PC-9 (cell line): ENCODE measurements at regions of chr6 and their contacts with region 1.

Region 1: GRCh38 chr6:105402939-105403935 is at the start of gene PREP:
- DNase-seq: peak; percentile 68 to 90
- H3K4me3 ChIP-seq: peak within 1 kb of the TSS; percentile 81
- H3K27ac ChIP-seq: peak within 1 kb of the TSS; percentile 69
- H3K4me1 ChIP-seq: peaks cover 20% of the 10 kb centered on the region
- H3K27me3 ChIP-seq: no peaks in the 10 kb centered on the region
- CTCF ChIP-seq: peak; percentile 96
- total RNA-seq, gene PREP: 35.8 and 36.7 TPM in 2 replicates

Region 2: DNA sequence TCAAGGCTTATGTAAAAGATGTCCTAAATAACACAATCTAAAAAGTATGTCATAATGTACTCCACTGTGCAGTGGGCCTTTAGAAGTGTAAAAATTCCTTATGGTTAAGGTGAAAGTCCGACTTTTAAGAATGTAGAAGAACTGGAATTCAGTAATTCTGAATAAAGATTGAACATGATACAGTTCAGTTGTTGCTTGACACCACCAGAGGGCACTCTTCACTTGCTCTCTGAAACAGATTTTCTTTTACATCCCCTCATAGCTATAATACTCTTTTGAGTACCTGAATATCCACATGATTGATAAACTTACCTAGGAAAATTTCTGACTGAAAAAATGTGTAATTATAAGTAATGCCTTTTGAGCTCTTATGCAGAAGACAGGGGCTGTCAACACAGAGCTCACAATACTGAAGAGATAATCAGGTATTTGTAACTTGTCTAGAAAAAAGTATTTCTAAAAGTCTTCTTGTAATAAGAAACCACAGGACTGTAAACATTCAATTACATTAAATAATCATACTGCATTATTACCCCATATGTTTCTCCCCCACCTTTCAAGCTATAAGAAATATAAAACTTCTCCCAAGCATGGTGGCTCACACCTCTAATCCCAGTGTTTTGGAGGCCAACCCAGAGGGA is 315.5 kb before region 1 on chr6:
- CTCF ChIA-PET with region 1: interaction called, 3 read pairs
- POLR2A ChIA-PET with region 1: interaction called, 61 read pairs
- intact Hi-C with region 1: loop called (anchors 1 kb)
- DNase-seq: peak; percentile 16 to 75
- H3K4me3 ChIP-seq: no peak overlapping the region
- H3K27ac ChIP-seq: no peak overlapping the region
- H3K4me1 ChIP-seq: peaks cover 4% of the 10 kb centered on the region; the same call in 1 of the 2 replicates
- H3K27me3 ChIP-seq: no peaks in the 10 kb centered on the region
- CTCF ChIP-seq: peak; percentile 96

Region 3: GRCh38 chr6:105317607-105318533 is 85.4 kb before region 1 on chr6:
- CTCF ChIA-PET with region 1: no interaction called
- POLR2A ChIA-PET with region 1: no interaction called
- intact Hi-C with region 1: loop called (anchors 1 kb)
- DNase-seq: peak; percentile 24 to 44
- H3K4me3 ChIP-seq: no peak overlapping the region
- H3K27ac ChIP-seq: no peak overlapping the region
- H3K4me1 ChIP-seq: no peaks in the 10 kb centered on the region
- H3K27me3 ChIP-seq: no peaks in the 10 kb centered on the region
- CTCF ChIP-seq: peak; percentile 82

Region 4: GRCh38 chr6:105326833-105327770 is 76.1 kb before region 1 on chr6:
- CTCF ChIA-PET with region 1: interaction called, 7 read pairs
- POLR2A ChIA-PET with region 1: no interaction called
- intact Hi-C with region 1: loop called (anchors 2 kb)
- DNase-seq: peak; percentile 44 to 83
- H3K4me3 ChIP-seq: no peak overlapping the region; the same call in 1 of the 2 replicates
- H3K27ac ChIP-seq: peak overlapping the region; percentile 62
- H3K4me1 ChIP-seq: peaks cover 27% of the 10 kb centered on the region
- H3K27me3 ChIP-seq: no peaks in the 10 kb centered on the region
- CTCF ChIP-seq: no peak

Region 5: GRCh38 chr6:105363100-105363754 is 40.0 kb before region 1 on chr6:
- CTCF ChIA-PET with region 1: interaction called, 5 read pairs
- POLR2A ChIA-PET with region 1: no interaction called
- intact Hi-C with region 1: loop called (anchors 1 kb)
- DNase-seq: no peak
- H3K4me3 ChIP-seq: no peak overlapping the region
- H3K27ac ChIP-seq: no peak overlapping the region
- H3K4me1 ChIP-seq: peaks cover 20% of the 10 kb centered on the region
- H3K27me3 ChIP-seq: no peaks in the 10 kb centered on the region
- CTCF ChIP-seq: peak; percentile 61

Region 6: DNA sequence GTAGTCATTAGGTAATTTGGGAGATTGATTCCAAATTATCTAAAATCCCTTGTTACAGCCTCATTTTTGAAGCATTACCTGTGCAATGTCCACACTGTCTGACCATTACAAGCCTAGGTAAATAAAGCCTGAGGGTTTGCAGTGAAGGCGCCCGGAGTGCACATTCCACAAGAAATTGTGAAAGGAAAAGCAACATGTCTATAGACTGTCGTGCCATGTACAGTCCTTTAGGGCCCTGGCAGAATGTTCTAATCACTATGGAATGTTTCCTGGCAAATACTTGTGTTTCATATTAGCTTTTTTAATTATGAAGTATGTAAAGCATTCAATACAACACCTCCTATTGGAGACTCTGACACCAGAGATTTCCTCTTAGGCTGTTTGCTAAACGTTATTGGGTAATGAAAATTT is 29.2 kb before region 1 on chr6:
- CTCF ChIA-PET with region 1: interaction called, 4 read pairs
- POLR2A ChIA-PET with region 1: interaction called, 8 read pairs
- intact Hi-C with region 1: loop called (anchors 2 kb)
- DNase-seq: peak; percentile 72 to 100
- H3K4me3 ChIP-seq: peak overlapping the region; percentile 6; the same call in 1 of the 2 replicates
- H3K27ac ChIP-seq: peak overlapping the region; percentile 86
- H3K4me1 ChIP-seq: peaks cover 38% of the 10 kb centered on the region
- H3K27me3 ChIP-seq: no peaks in the 10 kb centered on the region
- CTCF ChIP-seq: 0 out of 2 replicates have a peak, but pooled peaks have one; percentile 21